ENCODE measurements at regions of chr5 and their contacts with region 1.

Region 1: DNA sequence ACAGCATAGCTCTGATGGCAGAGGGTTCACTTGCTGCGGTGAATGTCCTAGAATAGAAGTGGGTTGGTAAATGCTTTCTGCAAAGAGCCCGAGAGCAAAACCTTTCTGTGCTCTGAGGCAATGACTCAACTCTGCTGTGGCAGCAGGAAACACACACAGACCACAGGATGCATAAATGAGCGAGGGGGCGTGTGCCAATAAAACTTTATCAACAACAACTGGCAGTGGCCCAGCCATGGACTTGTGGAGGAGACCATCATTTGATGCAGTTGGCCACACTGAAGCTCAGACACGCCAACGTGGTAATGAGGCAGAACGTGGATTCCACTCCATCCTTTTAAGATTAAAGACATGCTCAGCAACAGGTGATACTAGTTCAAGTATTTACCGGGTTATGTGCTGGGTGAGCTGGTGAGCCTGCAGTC is 6.8 kb downstream of the MRPL36 start:
- DNase-seq: peak; percentile 45 to 89 (median 78)
- H3K4me3 ChIP-seq: peak overlapping the region; percentile 11
- H3K4me3 Mint-ChIP-seq: peak overlapping the region; percentile 78 to 94 (median 85)
- H3K27ac ChIP-seq: no peak overlapping the region
- H3K27ac Mint-ChIP-seq: peak overlapping the region; percentile 83 to 99 (median 94)
- H3K4me1 ChIP-seq: peaks cover 29% of the 10 kb centered on the region
- H3K4me1 Mint-ChIP-seq: peaks cover 37 to 79% (median 66%) of the 10 kb centered on the region in 3 donors
- H3K27me3 ChIP-seq: no peaks in the 10 kb centered on the region
- H3K27me3 Mint-ChIP-seq: no peaks in the 10 kb centered on the region

Region 2: GRCh38 chr5:1772634-1773033 is 20.2 kb before region 1 on chr5:
- CTCF ChIA-PET with region 1: interaction called, 10 read pairs
- POLR2A ChIA-PET with region 1: interaction called, 3 read pairs
- DNase-seq: peak in 2 of 5 donors; percentile 21 to 50
- H3K4me3 ChIP-seq: no peak overlapping the region
- H3K4me3 Mint-ChIP-seq: no peak overlapping the region
- H3K27ac ChIP-seq: no peak overlapping the region
- H3K27ac Mint-ChIP-seq: peak overlapping the region in 2 of 8 donors; percentile 2 to 5
- H3K4me1 ChIP-seq: no peaks in the 10 kb centered on the region
- H3K4me1 Mint-ChIP-seq: no peaks in the 10 kb centered on the region
- H3K27me3 ChIP-seq: no peaks in the 10 kb centered on the region
- H3K27me3 Mint-ChIP-seq: peaks cover 2 to 6% of the 10 kb centered on the region in 2 donors

Region 3: GRCh38 chr5:1950708-1951103 is 157.9 kb after region 1 on chr5:
- CTCF ChIA-PET with region 1: no interaction called
- POLR2A ChIA-PET with region 1: no interaction called
- DNase-seq: no peak
- H3K4me3 ChIP-seq: no peak overlapping the region
- H3K4me3 Mint-ChIP-seq: no peak overlapping the region
- H3K27ac ChIP-seq: no peak overlapping the region
- H3K27ac Mint-ChIP-seq: peak overlapping the region in 1 of 8 donors; percentile 39
- H3K4me1 ChIP-seq: no peaks in the 10 kb centered on the region
- H3K4me1 Mint-ChIP-seq: no peaks in the 10 kb centered on the region
- H3K27me3 ChIP-seq: peaks cover 8% of the 10 kb centered on the region
- H3K27me3 Mint-ChIP-seq: peaks cover 5 to 32% of the 10 kb centered on the region in 2 donors

Measured in CD8-positive, alpha-beta memory T cell (primary cell).